ENCODE measurements at regions of chr20 and their contacts with region 1.

Region 1: GRCh38 chr20:47125583-47126373 is 230.7 kb downstream of the ZMYND8 start:
- DNase-seq: peak; percentile 27
- H3K4me3 Mint-ChIP-seq: peak overlapping the region; percentile 22
- H3K27ac Mint-ChIP-seq: peak overlapping the region; percentile 64
- H3K4me1 Mint-ChIP-seq: peaks cover 44% of the 10 kb centered on the region
- H3K27me3 Mint-ChIP-seq: no peaks in the 10 kb centered on the region
- CTCF ChIP-seq: no peak

Region 2: DNA sequence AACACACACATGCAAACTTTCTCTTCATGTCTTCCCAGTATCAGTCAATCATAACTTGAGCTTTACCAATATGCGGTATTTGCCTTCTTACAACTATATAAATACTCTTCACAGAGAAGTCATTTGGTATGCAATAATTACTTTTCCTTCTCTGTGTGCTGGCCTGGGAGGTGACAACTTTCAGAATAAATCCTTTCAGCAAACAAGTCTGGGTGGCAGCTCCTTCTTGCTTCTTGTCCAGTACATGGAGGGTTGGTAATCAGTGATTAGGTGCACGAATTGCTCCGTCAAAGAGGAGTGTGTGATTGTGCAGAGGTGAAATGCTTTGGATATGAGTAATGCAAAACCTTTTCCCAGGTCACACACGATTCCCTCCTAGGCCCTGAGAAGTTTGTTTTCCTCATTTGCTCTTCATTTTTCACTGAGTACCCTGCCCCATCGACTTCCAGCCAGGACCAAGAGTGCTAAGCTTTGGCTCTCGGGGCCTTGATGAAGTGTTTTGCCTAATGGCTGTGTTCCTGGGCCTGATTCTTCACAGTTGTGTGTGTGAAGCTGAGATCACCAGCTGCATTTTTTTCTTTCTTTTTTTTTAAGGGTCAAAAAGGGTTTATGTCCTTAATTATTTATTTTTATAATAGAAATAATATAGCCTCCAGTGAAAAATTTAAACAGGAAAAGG is 14.2 kb after region 1 on chr20:
- CTCF ChIA-PET with region 1: interaction called, 15 read pairs
- intact Hi-C with region 1: no loop called
- DNase-seq: peak; percentile 66
- H3K4me3 Mint-ChIP-seq: peak overlapping the region; percentile 4
- H3K27ac Mint-ChIP-seq: peak overlapping the region; percentile 43
- H3K4me1 Mint-ChIP-seq: peaks cover 60% of the 10 kb centered on the region
- H3K27me3 Mint-ChIP-seq: no peaks in the 10 kb centered on the region
- CTCF ChIP-seq: no peak

Region 3: GRCh38 chr20:47173596-47174216 is 47.9 kb after region 1 on chr20:
- CTCF ChIA-PET with region 1: interaction called, 11 read pairs
- intact Hi-C with region 1: no loop called
- DNase-seq: no peak
- H3K4me3 Mint-ChIP-seq: no peak overlapping the region
- H3K27ac Mint-ChIP-seq: no peak overlapping the region
- H3K4me1 Mint-ChIP-seq: no peaks in the 10 kb centered on the region
- H3K27me3 Mint-ChIP-seq: peaks cover 47% of the 10 kb centered on the region
- CTCF ChIP-seq: no peak

Region 4: DNA sequence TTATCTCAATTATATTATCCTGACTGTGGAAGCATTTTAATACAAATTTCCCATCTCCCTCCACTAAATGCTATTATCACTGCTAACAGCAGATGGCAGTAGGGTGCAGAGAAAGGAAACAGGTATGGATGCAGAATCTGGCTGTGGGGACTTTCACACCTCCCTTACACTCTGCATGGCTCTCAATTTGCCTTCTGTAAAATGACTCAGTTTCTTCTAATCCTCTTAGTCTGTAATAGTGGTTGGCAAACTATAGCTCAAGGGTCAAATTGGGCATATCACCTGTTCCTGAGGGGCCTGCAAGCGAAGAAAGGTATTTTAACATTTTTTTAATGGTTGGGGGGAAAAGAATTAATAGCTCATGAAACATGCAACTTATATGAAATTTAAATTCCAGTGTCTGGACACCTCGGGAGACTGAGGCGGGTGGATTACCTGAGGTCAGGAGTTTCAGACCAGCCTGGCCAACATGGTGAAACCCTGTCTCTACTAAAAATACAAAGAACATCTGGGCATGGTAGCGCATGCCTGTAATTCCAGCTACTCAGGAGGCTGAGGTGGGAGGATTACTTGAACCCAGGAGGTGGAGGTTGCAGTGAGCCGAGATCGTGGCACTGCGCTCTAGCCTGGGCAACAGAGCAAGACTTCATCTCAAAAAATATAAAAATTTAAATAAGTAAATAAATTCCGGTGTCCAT is 147.3 kb after region 1 on chr20:
- CTCF ChIA-PET with region 1: no interaction called
- intact Hi-C with region 1: no loop called
- DNase-seq: peak; percentile 82
- H3K4me3 Mint-ChIP-seq: no peak overlapping the region
- H3K27ac Mint-ChIP-seq: peak overlapping the region; percentile 90
- H3K4me1 Mint-ChIP-seq: peaks cover 42% of the 10 kb centered on the region
- H3K27me3 Mint-ChIP-seq: no peaks in the 10 kb centered on the region
- CTCF ChIP-seq: peak; percentile 92

Measured in Calu3 (cell line).